ENCODE measurements at regions of chr1 and their contacts with region 1.

Region 1: DNA sequence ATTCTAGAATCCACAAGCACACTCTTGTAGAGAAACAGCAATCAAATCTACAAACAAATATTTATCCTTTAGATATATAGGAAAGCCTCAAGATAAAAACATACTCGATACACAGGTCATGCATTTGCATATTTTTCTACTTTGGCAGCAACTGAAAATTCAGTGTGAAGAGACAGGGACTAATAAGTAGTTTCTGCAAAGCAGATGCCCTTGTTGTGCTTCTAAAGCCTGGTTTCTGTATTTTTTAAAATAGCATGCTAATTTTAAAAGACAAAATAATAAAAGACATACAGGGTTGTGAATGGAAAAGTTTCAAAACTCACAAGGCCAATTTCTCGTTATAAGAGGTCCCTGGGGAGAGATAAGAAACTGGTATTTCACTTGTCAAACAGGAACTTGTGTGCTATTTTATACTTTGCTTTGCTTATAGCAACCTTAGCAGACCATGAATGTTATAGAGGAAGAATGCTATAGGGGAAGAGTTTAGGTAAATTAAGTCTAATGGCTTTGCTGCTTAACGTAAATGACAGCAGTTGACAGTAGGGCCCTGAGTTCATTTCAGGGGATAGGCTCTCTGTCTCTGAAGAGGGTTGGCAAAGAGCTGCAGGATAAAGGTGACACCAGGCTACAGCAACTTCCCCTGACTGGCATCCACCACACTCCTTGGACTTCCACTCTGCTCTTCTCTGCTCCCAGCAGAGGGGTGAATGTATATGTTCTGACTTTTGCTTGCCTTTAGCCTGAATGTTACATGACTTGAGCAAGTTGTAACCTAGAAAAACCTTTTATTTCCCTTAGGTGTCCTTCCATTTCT is 9.4 kb upstream of the RGS13 start:
- DNase-seq: no peak
- H3K4me3 ChIP-seq: no peak overlapping the region
- H3K27ac ChIP-seq: no peak overlapping the region
- H3K4me1 ChIP-seq: peaks cover 0 to 11% of the 10 kb centered on the region in 2 donors
- H3K27me3 ChIP-seq: no peaks in the 10 kb centered on the region
- CTCF ChIP-seq: no peak

Region 2: DNA sequence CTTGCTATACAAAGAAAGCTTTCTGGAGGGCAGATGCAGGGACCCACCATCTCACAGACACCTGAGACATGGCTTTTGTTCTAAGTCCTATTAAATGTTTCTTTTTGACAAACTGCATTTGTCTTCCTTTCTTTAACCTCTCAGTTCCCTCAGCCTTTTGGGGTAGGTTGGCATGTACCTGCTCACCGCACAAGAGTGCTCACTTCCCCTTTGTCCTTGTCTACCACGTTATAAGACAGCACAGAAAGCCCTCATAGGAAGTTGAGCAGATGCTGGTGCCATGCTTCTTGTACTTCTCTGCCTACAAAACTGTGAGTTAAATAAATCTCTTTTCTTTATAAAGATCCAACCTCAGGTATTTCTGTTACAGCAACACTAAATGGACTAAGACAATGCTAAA is 341.6 kb before region 1 on chr1:
- intact Hi-C with region 1: no loop called
- DNase-seq: no peak
- H3K4me3 ChIP-seq: no peak overlapping the region
- H3K27ac ChIP-seq: no peak overlapping the region
- H3K4me1 ChIP-seq: no peaks in the 10 kb centered on the region
- H3K27me3 ChIP-seq: no peaks in the 10 kb centered on the region
- CTCF ChIP-seq: no peak

Region 3: GRCh38 chr1:193019442-193020026 is 393.0 kb after region 1 on chr1:
- intact Hi-C with region 1: loop called (anchors 10 kb)
- DNase-seq: no peak
- H3K4me3 ChIP-seq: no peak overlapping the region
- H3K27ac ChIP-seq: no peak overlapping the region
- H3K4me1 ChIP-seq: no peaks in the 10 kb centered on the region
- H3K27me3 ChIP-seq: no peaks in the 10 kb centered on the region
- CTCF ChIP-seq: peak in 2 of 3 experiments; percentile 49 to 59

Measured in ascending aorta (tissue), 2 donors.